Gastrocnemius medialis (tissue), 4 donors: ENCODE measurements at regions of chr17 and their contacts with region 1.

Region 1: GRCh38 chr17:47253541-47254402 is at the start of gene ITGB3:
- DNase-seq: peak; percentile 26 to 39
- ATAC-seq: peak; percentile 85 to 89
- H3K4me3 ChIP-seq: peak within 1 kb of the TSS; percentile 60 to 76 (median 64)
- H3K27ac ChIP-seq: peak within 1 kb of the TSS; percentile 39 to 71 (median 57)
- H3K4me1 ChIP-seq: peaks cover 3 to 6% of the 10 kb centered on the region in 2 donors
- H3K27me3 ChIP-seq: peaks cover 15 to 23% (median 20%) of the 10 kb centered on the region in 3 donors
- CTCF ChIP-seq: peak in 4 of 5 experiments; percentile 11 to 50 (median 40)
- POLR2A ChIP-seq: peak; percentile 36 to 41
- total RNA-seq, gene ITGB3: 0.92 to 6.2 (median 1.9) TPM in 3 of 4 donors, not detected in the other

Region 2: DNA sequence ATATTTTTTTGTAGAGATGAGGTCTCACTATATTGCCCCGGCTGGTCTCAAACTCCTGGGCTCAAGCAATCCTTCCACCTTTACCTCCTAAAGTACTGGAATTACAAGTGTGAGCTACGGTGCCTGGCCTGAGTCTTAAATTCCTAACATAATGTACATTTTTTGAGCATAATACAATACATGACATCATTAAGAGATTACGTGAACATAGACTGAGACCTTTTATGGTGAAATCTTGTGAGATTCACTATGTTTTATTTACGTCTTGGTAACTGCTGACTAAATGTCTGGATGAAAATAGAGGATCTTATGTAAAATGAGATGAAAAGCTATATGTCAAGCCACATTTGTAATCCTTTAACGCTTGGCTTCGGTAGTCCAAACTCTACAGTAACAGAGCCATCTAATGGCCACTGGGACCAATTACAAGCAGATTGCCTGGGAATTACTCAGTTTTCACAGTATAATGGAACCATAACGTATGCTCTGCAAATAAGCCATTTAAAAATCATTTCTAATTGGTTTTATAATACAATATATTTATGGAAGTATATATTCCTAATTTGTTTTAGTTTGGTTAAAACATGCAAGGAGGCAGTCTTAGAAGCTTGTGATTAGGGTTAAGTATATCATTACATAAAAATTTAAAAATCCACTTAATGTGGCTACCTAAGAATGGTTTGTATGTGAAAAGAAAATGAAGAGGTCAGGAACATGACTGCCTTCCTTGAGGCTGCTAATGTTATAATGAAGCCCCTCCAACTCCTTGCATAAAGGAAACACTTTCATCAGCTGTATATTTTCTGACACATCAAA is 61.9 kb after region 1 on chr17:
- in situ Hi-C with region 1: no loop called
- intact Hi-C with region 1: loop called (anchors 5 kb)
- DNase-seq: no peak
- ATAC-seq: peak; percentile 66 to 70
- H3K4me3 ChIP-seq: no peak overlapping the region
- H3K27ac ChIP-seq: peak overlapping the region in 3 of 4 donors; percentile 4 to 27 (median 18)
- H3K4me1 ChIP-seq: no peaks in the 10 kb centered on the region
- H3K27me3 ChIP-seq: no peaks in the 10 kb centered on the region
- CTCF ChIP-seq: peak; percentile 51 to 76 (median 66)
- POLR2A ChIP-seq: no peak